ENCODE measurements at regions of chr10 and their contacts with region 1.

Region 1: DNA sequence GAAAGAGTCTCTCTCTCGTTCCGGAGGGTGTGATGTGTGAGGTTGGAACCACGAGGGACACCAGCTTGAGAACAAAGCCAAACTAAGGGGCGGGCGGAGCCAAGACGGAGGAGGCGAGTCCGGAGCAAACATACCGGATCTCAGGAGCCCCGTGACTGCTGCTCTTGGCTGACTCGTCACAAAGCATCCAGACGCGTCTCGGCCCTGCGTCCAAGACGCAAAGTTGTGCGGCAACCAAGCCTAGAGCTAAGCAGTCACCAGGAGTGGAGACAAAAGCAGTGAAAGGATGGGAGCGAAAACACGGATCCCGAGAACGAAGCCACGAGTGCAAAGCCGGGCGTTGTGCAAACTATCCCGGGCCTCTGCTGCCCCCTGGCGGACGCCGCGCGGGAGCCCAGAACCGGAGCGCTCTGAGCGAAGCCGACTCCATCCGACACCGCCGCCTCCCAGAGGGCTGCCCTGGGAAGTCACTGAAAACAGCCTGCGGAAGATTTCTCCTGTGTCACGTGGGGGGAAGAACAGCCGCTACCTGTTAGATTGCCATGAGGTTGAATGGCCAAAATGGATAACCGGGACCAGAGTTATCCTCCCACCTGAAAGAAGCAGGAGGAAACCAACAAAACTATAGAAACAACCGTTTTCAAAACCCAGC is 46.4 kb upstream of the TMEM72 start:
- DNase-seq: peak; percentile 91 to 95
- ATAC-seq: peak; percentile 95 to 99 (median 98)
- H3K4me3 ChIP-seq: peak overlapping the region; percentile 63
- H3K27ac ChIP-seq: no peak overlapping the region
- H3K4me1 ChIP-seq: no peaks in the 10 kb centered on the region
- H3K27me3 ChIP-seq: peaks cover 0 to 4% (median 2%) of the 10 kb centered on the region in 3 donors
- CTCF ChIP-seq: peak; percentile 95

Region 2: GRCh38 chr10:43671656-43672531 is 1192.9 kb before region 1 on chr10:
- intact Hi-C with region 1: loop called (anchors 1 to 5 kb)
- DNase-seq: peak in 1 of 2 donors; percentile 32
- ATAC-seq: peak; percentile 71 to 89 (median 86)
- H3K4me3 ChIP-seq: no peak overlapping the region
- H3K27ac ChIP-seq: no peak overlapping the region
- H3K4me1 ChIP-seq: no peaks in the 10 kb centered on the region
- H3K27me3 ChIP-seq: peaks cover 0 to 17% (median 6%) of the 10 kb centered on the region in 3 donors
- CTCF ChIP-seq: peak; percentile 83

Region 3: GRCh38 chr10:43689955-43690771 is 1174.6 kb before region 1 on chr10:
- intact Hi-C with region 1: loop called (anchors 5 kb)
- DNase-seq: peak; percentile 86 to 92
- ATAC-seq: peak; percentile 97 to 99 (median 98)
- H3K4me3 ChIP-seq: peak overlapping the region; percentile 66
- H3K27ac ChIP-seq: peak overlapping the region; percentile 68
- H3K4me1 ChIP-seq: no peaks in the 10 kb centered on the region
- H3K27me3 ChIP-seq: no peaks in the 10 kb centered on the region
- CTCF ChIP-seq: peak; percentile 85